Mammary epithelial cell (primary cell): ENCODE measurements at regions of chr16 and their contacts with region 1.

Region 1: GRCh38 chr16:19040400-19040799 is 27.0 kb upstream of the COQ7 start:
- DNase-seq: no peak
- H3K4me3 ChIP-seq: no peak overlapping the region
- H3K27ac ChIP-seq: no peak overlapping the region
- H3K4me1 ChIP-seq: no peaks in the 10 kb centered on the region
- H3K27me3 ChIP-seq: no peaks in the 10 kb centered on the region
- CTCF ChIP-seq: no peak

Region 2: GRCh38 chr16:18959031-18959505 is 81.3 kb before region 1 on chr16:
- CTCF ChIA-PET with region 1: no interaction called
- dilution Hi-C with region 1: no loop called
- in situ Hi-C with region 1: no loop called
- intact Hi-C with region 1: no loop called
- DNase-seq: no peak
- H3K4me3 ChIP-seq: no peak overlapping the region
- H3K27ac ChIP-seq: peak overlapping the region; percentile 34
- H3K4me1 ChIP-seq: peaks cover 38% of the 10 kb centered on the region
- H3K27me3 ChIP-seq: no peaks in the 10 kb centered on the region
- CTCF ChIP-seq: no peak

Region 3: GRCh38 chr16:19130852-19131810 is 90.7 kb after region 1 on chr16:
- CTCF ChIA-PET with region 1: no interaction called
- dilution Hi-C with region 1: no loop called
- in situ Hi-C with region 1: no loop called
- intact Hi-C with region 1: no loop called
- DNase-seq: no peak
- H3K4me3 ChIP-seq: no peak overlapping the region
- H3K27ac ChIP-seq: no peak overlapping the region
- H3K4me1 ChIP-seq: peaks cover 16% of the 10 kb centered on the region
- H3K27me3 ChIP-seq: no peaks in the 10 kb centered on the region
- CTCF ChIP-seq: no peak

Region 4: GRCh38 chr16:19601083-19601976 is 560.9 kb after region 1 on chr16:
- CTCF ChIA-PET with region 1: interaction called, 20 read pairs
- dilution Hi-C with region 1: no loop called
- in situ Hi-C with region 1: no loop called
- intact Hi-C with region 1: no loop called
- DNase-seq: no peak
- H3K4me3 ChIP-seq: no peak overlapping the region
- H3K27ac ChIP-seq: no peak overlapping the region
- H3K4me1 ChIP-seq: no peaks in the 10 kb centered on the region
- H3K27me3 ChIP-seq: no peaks in the 10 kb centered on the region
- CTCF ChIP-seq: peak; percentile 59 to 63